B cell (primary cell): ENCODE measurements at regions of chr3 and their contacts with region 1.

Region 1: GRCh38 chr3:196867507-196868296 is at the start of gene SENP5:
- DNase-seq: peak; percentile 93
- ATAC-seq: peak; percentile 97
- H3K4me3 ChIP-seq: peak within 1 kb of the TSS; percentile 63 to 89 (median 77)
- H3K4me3 Mint-ChIP-seq: peak within 1 kb of the TSS; percentile 96
- H3K27ac ChIP-seq: peak within 1 kb of the TSS; percentile 77 to 95
- H3K27ac Mint-ChIP-seq: peak within 1 kb of the TSS; percentile 95
- H3K4me1 ChIP-seq: peaks cover 14 to 19% of the 10 kb centered on the region in 2 donors
- H3K4me1 Mint-ChIP-seq: peaks cover 29% of the 10 kb centered on the region
- H3K27me3 ChIP-seq: no peaks in the 10 kb centered on the region
- H3K27me3 Mint-ChIP-seq: no peaks in the 10 kb centered on the region
- CTCF ChIP-seq: no peak
- total RNA-seq, gene SENP5: 51.5 and 58.4 TPM in 2 replicates

Region 2: GRCh38 chr3:196932600-196932999 is 64.9 kb after region 1 on chr3:
- CTCF ChIA-PET with region 1: no interaction called
- POLR2A ChIA-PET with region 1: no interaction called
- intact Hi-C with region 1: loop called (anchors 2 kb)
- DNase-seq: peak; percentile 55
- ATAC-seq: peak; percentile 71
- H3K4me3 ChIP-seq: no peak overlapping the region
- H3K4me3 Mint-ChIP-seq: peak overlapping the region; percentile 65
- H3K27ac ChIP-seq: peak overlapping the region; percentile 36 to 74
- H3K27ac Mint-ChIP-seq: peak overlapping the region; percentile 87
- H3K4me1 ChIP-seq: peaks cover 12 to 18% of the 10 kb centered on the region in 2 donors
- H3K4me1 Mint-ChIP-seq: peaks cover 29% of the 10 kb centered on the region
- H3K27me3 ChIP-seq: no peaks in the 10 kb centered on the region
- H3K27me3 Mint-ChIP-seq: no peaks in the 10 kb centered on the region
- CTCF ChIP-seq: no peak

Region 3: DNA sequence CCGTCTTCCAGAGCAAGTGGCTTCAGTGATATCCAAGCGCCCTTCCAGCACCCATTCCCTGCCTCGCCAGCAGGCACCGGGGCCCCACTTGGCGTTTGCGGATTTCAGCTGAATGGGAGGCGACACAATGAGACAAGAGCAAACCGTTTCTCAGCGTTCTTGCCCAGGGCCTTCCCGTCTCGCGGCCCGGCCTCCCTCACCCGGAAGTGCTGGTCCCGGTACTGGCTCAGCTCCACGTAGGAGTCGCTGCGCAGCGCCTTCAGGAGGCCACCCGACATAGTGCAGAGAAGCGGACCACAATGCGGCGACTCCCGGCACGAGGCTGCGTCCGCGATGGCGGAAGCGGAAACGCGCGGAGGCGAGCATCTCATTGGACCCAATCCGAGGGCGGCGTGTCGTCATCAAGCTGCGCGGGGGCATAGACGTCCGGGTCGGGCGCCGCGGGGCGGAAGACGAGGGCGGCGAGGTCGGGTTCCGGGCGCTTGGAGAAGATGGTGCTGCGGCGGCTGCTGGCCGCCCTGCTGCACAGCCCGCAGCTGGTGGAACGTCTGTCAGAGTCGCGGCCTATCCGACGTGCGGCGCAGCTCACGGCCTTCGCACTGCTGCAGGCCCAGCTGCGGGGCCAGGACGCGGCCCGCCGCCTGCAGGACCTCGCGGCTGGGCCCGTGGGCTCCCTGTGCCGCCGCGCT is 74.7 kb after region 1 on chr3 and contains the start of gene NCBP2:
- CTCF ChIA-PET with region 1: interaction called, 20 read pairs
- POLR2A ChIA-PET with region 1: interaction called, 18 read pairs
- intact Hi-C with region 1: loop called (anchors 1 kb)
- DNase-seq: peak; percentile 99
- ATAC-seq: peak; percentile 91
- H3K4me3 ChIP-seq: peak within 1 kb of the TSS; percentile 83 to 99 (median 92)
- H3K4me3 Mint-ChIP-seq: peak within 1 kb of the TSS; percentile 98
- H3K27ac ChIP-seq: peak within 1 kb of the TSS; percentile 92 to 97
- H3K27ac Mint-ChIP-seq: peak within 1 kb of the TSS; percentile 99
- H3K4me1 ChIP-seq: peaks cover 29 to 35% of the 10 kb centered on the region in 2 donors
- H3K4me1 Mint-ChIP-seq: peaks cover 50% of the 10 kb centered on the region
- H3K27me3 ChIP-seq: no peaks in the 10 kb centered on the region
- H3K27me3 Mint-ChIP-seq: no peaks in the 10 kb centered on the region
- CTCF ChIP-seq: peak; percentile 77
- total RNA-seq, gene NCBP2: 93.4 and 95.0 TPM in 2 replicates

Region 4: DNA sequence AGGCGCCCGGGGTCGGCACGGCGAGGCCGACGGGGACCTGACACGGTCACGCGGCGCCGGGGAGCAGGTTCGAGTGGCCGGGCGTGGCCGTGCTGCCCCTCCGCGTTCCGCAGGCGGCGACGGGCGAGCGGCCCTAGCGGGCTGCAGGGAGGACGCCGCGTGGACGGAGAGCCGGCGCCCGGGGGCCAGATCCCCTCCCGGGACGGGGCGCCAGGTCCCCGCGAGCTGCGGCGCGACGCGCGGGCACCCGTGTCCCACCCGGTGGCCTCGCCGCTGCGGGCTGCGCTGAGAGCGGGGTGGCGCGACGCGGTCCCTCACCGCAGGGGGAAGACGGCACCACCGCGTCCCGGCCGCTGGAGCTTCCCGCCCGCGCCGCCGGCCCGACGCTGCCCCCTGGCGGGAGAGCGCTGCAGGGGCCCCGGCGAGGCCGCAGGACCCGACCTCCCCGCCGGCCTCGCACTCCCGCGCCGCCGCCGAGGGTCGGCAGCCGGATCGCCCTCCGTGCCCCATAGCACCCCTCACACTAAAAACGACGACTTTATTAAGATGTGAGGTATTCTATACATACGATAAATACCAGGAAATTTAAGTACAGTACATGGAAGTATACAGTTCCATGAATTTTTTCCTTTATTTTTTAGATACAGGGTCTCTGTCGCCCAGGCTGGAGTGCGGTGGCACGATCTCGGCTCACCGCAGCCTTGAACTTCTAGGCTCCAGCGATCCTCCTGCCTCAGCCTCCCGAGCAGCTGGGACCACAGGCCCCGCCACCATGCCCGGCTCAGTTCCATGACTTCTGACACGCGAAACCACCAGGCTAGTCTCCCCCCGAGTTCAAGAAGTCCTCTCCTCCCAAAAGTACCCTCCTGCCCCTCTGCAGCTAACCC is 102.2 kb after region 1 on chr3:
- CTCF ChIA-PET with region 1: interaction called, 3 read pairs
- POLR2A ChIA-PET with region 1: no interaction called
- intact Hi-C with region 1: loop called (anchors 1 kb)
- DNase-seq: peak; percentile 83
- ATAC-seq: peak; percentile 76
- H3K4me3 ChIP-seq: peak overlapping the region; percentile 46 to 82 (median 68)
- H3K4me3 Mint-ChIP-seq: peak overlapping the region; percentile 85
- H3K27ac ChIP-seq: no peak overlapping the region
- H3K27ac Mint-ChIP-seq: peak overlapping the region; percentile 81
- H3K4me1 ChIP-seq: peaks cover 5 to 11% of the 10 kb centered on the region in 2 donors
- H3K4me1 Mint-ChIP-seq: peaks cover 19% of the 10 kb centered on the region
- H3K27me3 ChIP-seq: peaks cover 0 to 4% (median 1%) of the 10 kb centered on the region in 4 experiments
- H3K27me3 Mint-ChIP-seq: peaks cover 9% of the 10 kb centered on the region
- CTCF ChIP-seq: peak; percentile 86